ENCODE measurements at regions of chr15 and their contacts with region 1.

Region 1: DNA sequence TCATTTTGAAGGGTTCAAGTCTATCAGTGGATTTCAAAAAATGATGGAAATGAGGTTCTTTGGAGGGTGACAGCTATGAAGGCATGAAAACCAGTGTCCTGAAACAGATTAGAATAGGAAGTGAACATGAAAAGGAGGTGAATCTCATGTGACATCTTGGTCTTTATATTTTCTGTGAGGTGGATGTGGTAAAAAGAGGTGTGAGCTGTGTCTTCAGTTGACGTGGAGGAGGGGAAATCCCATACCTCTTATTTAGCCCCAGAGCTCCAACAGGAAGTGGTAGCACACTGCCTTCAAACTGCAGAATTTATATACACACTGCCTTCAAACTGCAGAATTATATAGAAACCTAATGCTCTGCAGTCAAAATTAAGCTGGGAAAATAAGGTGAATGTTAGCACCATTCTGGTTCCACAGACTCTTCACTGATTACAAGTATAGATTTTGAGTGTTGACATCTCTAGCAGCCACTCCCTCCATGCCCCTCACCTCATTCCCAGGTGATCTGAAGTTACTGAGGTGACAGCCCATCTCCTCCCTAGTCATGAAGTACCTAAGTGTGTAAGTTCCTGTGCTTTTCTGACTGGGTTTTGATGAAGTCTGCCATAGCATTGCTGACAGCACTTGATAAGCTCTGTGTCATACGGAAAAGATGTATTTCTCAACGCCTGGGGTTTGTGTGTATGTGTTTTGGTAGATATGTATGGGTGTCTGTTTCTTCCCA is 2.7 kb downstream of the RAB8B start:
- DNase-seq: peak; percentile 81
- H3K4me3 Mint-ChIP-seq: peak overlapping the region; percentile 96
- H3K27ac Mint-ChIP-seq: peak overlapping the region; percentile 98
- H3K4me1 Mint-ChIP-seq: peaks cover 71% of the 10 kb centered on the region
- H3K27me3 Mint-ChIP-seq: no peaks in the 10 kb centered on the region

Region 2: DNA sequence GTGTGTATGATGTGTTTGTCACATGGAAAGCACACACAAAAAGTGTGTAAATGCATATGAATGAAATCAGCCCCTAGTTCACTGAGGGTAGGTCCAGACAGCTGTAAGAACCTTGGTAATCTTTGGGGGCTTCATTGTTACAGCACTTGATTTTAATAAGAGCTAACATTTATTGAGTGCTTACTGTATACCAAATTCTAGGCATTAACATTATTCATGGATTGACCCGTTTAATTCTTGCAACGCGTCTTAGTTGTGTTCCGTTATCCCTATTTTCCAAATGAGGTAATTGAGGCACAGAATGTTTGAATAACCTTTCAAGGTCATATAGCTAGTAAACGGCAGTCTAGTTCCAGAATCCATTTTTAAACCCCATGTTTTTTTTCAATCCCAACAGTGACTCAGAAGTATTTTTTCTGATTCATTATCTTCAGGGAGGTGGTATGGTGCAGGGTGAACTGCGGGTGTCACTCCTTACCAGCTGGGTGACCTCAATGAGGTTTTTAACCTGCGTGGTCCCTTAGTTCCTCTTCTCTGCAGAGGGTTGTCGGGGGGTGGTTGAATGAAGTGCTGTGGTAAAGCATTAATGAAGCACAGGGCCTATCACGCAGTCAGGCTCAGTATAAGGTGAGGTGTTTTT is 11.5 kb after region 1 on chr15:
- CTCF ChIA-PET with region 1: interaction called, 12 read pairs
- POLR2A ChIA-PET with region 1: interaction called, 3 read pairs
- DNase-seq: peak; percentile 38
- H3K4me3 Mint-ChIP-seq: no peak overlapping the region
- H3K27ac Mint-ChIP-seq: peak overlapping the region; percentile 36
- H3K4me1 Mint-ChIP-seq: peaks cover 84% of the 10 kb centered on the region
- H3K27me3 Mint-ChIP-seq: no peaks in the 10 kb centered on the region